ENCODE measurements at regions of chr3 and their contacts with region 1.

Region 1: GRCh38 chr3:160413613-160414248 is 14.3 kb downstream of the SMC4 start:
- DNase-seq: peak; percentile 19
- ATAC-seq: peak; percentile 90
- H3K4me3 Mint-ChIP-seq: no peak overlapping the region
- H3K27ac Mint-ChIP-seq: no peak overlapping the region
- H3K4me1 Mint-ChIP-seq: peaks cover 1% of the 10 kb centered on the region
- H3K27me3 Mint-ChIP-seq: no peaks in the 10 kb centered on the region
- CTCF ChIP-seq: peak; percentile 98

Region 2: GRCh38 chr3:158845765-158846350 is 1567.9 kb before region 1 on chr3:
- CTCF ChIA-PET with region 1: no interaction called
- POLR2A ChIA-PET with region 1: no interaction called
- intact Hi-C with region 1: loop called (anchors 2 kb)
- DNase-seq: no peak
- ATAC-seq: peak; percentile 34
- H3K4me3 Mint-ChIP-seq: no peak overlapping the region
- H3K27ac Mint-ChIP-seq: no peak overlapping the region
- H3K4me1 Mint-ChIP-seq: peaks cover 3% of the 10 kb centered on the region
- H3K27me3 Mint-ChIP-seq: no peaks in the 10 kb centered on the region
- CTCF ChIP-seq: peak; percentile 29

Region 3: GRCh38 chr3:159828542-159828943 is 585.2 kb before region 1 on chr3:
- CTCF ChIA-PET with region 1: interaction called, 3 read pairs
- POLR2A ChIA-PET with region 1: no interaction called
- intact Hi-C with region 1: loop called (anchors 1 kb)
- DNase-seq: no peak
- ATAC-seq: peak; percentile 31
- H3K4me3 Mint-ChIP-seq: no peak overlapping the region
- H3K27ac Mint-ChIP-seq: no peak overlapping the region
- H3K4me1 Mint-ChIP-seq: peaks cover 4% of the 10 kb centered on the region
- H3K27me3 Mint-ChIP-seq: no peaks in the 10 kb centered on the region
- CTCF ChIP-seq: no peak

Region 4: GRCh38 chr3:160027541-160028195 is 386.1 kb before region 1 on chr3:
- CTCF ChIA-PET with region 1: interaction called, 18 read pairs
- POLR2A ChIA-PET with region 1: interaction called, 4 read pairs
- intact Hi-C with region 1: loop called (anchors 1 kb)
- DNase-seq: no peak
- ATAC-seq: no peak
- H3K4me3 Mint-ChIP-seq: no peak overlapping the region
- H3K27ac Mint-ChIP-seq: peak overlapping the region; percentile 36
- H3K4me1 Mint-ChIP-seq: no peaks in the 10 kb centered on the region
- H3K27me3 Mint-ChIP-seq: no peaks in the 10 kb centered on the region
- CTCF ChIP-seq: no peak

Region 5: GRCh38 chr3:160163229-160163878 is 250.4 kb before region 1 on chr3:
- CTCF ChIA-PET with region 1: interaction called, 7 read pairs
- POLR2A ChIA-PET with region 1: no interaction called
- intact Hi-C with region 1: loop called (anchors 1 kb)
- DNase-seq: no peak
- ATAC-seq: no peak
- H3K4me3 Mint-ChIP-seq: no peak overlapping the region
- H3K27ac Mint-ChIP-seq: no peak overlapping the region
- H3K4me1 Mint-ChIP-seq: no peaks in the 10 kb centered on the region
- H3K27me3 Mint-ChIP-seq: peaks cover 4% of the 10 kb centered on the region
- CTCF ChIP-seq: no peak